Caco-2 (cell line): ENCODE measurements at regions of chr12 and their contacts with region 1.

Region 1: GRCh38 chr12:71415336-71416231 is 24.0 kb upstream of the LGR5 start:
- DNase-seq: peak; percentile 41 to 72
- H3K4me3 ChIP-seq: no peak overlapping the region
- H3K4me3 Mint-ChIP-seq: no peak overlapping the region
- H3K27ac Mint-ChIP-seq: no peak overlapping the region
- H3K4me1 ChIP-seq: no peaks in the 10 kb centered on the region
- H3K4me1 Mint-ChIP-seq: no peaks in the 10 kb centered on the region
- H3K27me3 ChIP-seq: no peaks in the 10 kb centered on the region
- H3K27me3 Mint-ChIP-seq: no peaks in the 10 kb centered on the region
- CTCF ChIP-seq: peak; percentile 70 to 74

Region 2: DNA sequence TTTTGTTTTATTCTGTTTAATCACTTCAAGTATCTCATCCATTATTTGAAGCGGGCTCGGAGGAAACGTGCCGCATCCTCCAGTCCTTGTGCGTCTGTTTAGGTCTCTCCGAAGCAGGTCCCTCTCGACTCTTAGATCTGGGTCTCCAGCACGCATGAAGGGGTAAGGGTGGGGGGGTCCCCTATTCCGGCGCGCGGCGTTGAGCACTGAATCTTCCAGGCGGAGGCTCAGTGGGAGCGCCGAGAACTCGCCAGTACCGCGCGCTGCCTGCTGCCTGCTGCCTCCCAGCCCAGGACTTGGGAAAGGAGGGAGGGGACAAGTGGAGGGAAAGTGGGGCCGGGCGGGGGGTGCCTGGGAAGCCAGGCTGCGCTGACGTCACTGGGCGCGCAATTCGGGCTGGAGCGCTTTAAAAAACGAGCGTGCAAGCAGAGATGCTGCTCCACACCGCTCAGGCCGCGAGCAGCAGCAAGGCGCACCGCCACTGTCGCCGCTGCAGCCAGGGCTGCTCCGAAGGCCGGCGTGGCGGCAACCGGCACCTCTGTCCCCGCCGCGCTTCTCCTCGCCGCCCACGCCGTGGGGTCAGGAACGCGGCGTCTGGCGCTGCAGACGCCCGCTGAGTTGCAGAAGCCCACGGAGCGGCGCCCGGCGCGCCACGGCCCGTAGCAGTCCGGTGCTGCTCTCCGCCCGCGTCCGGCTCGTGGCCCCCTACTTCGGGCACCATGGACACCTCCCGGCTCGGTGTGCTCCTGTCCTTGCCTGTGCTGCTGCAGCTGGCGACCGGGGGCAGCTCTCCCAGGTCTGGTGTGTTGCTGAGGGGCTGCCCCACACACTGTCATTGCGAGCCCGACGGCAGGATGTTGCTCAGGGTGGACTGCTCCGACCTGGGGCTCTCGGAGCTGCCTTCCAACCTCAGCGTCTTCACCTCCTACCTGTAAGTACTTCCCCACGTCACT is 24.1 kb after region 1 on chr12 and contains the start of gene LGR5:
- CTCF ChIA-PET with region 1: no interaction called
- POLR2A ChIA-PET with region 1: no interaction called
- intact Hi-C with region 1: loop called (anchors 1 kb)
- DNase-seq: peak; percentile 84 to 86
- H3K4me3 ChIP-seq: peak within 1 kb of the TSS; percentile 61
- H3K4me3 Mint-ChIP-seq: peak within 1 kb of the TSS; percentile 82
- H3K27ac Mint-ChIP-seq: peak within 1 kb of the TSS; percentile 40
- H3K4me1 ChIP-seq: peaks cover 3% of the 10 kb centered on the region; the same call in 1 of the 2 replicates
- H3K4me1 Mint-ChIP-seq: peaks cover 24% of the 10 kb centered on the region
- H3K27me3 ChIP-seq: no peaks in the 10 kb centered on the region
- H3K27me3 Mint-ChIP-seq: no peaks in the 10 kb centered on the region
- CTCF ChIP-seq: no peak
- total RNA-seq, gene LGR5: 28.0 and 28.4 TPM in 2 replicates

Region 3: DNA sequence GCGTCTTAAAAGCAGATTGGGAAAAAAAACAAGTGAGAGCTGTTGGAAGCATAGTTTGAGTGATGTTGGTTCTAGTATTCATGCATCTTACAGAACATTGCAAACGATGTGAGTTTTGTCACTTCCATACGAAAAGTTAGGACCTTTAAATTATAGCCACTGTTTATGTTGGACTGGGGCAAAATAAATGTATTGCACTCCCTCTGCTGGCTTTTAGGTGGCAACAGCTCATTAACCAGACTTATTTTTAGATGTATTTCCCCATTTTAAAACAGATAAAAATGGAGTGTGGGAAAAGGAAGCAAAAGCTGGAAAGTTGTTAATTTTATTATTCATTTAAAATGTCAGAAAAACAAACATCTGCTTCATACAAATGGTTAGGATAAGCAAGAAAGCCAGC is 135.9 kb after region 1 on chr12:
- CTCF ChIA-PET with region 1: interaction called, 5 read pairs
- POLR2A ChIA-PET with region 1: no interaction called
- intact Hi-C with region 1: loop called (anchors 1 kb)
- DNase-seq: no peak
- H3K4me3 ChIP-seq: no peak overlapping the region
- H3K4me3 Mint-ChIP-seq: no peak overlapping the region
- H3K27ac Mint-ChIP-seq: no peak overlapping the region
- H3K4me1 ChIP-seq: no peaks in the 10 kb centered on the region
- H3K4me1 Mint-ChIP-seq: peaks cover 7% of the 10 kb centered on the region
- H3K27me3 ChIP-seq: no peaks in the 10 kb centered on the region
- H3K27me3 Mint-ChIP-seq: no peaks in the 10 kb centered on the region
- CTCF ChIP-seq: peak; percentile 48 to 54

Region 4: GRCh38 chr12:71567537-71567936 is 152.0 kb after region 1 on chr12:
- CTCF ChIA-PET with region 1: no interaction called
- POLR2A ChIA-PET with region 1: no interaction called
- intact Hi-C with region 1: loop called (anchors 1 kb)
- DNase-seq: peak in 1 of 2 experiments; percentile 12
- H3K4me3 ChIP-seq: no peak overlapping the region
- H3K4me3 Mint-ChIP-seq: no peak overlapping the region
- H3K27ac Mint-ChIP-seq: no peak overlapping the region
- H3K4me1 ChIP-seq: peaks cover 4% of the 10 kb centered on the region; the same call in 1 of the 2 replicates
- H3K4me1 Mint-ChIP-seq: no peaks in the 10 kb centered on the region
- H3K27me3 ChIP-seq: no peaks in the 10 kb centered on the region
- H3K27me3 Mint-ChIP-seq: no peaks in the 10 kb centered on the region
- CTCF ChIP-seq: no peak

Region 5: GRCh38 chr12:71636704-71637115 is 221.1 kb after region 1 on chr12:
- CTCF ChIA-PET with region 1: no interaction called
- POLR2A ChIA-PET with region 1: no interaction called
- intact Hi-C with region 1: loop called (anchors 1 kb)
- DNase-seq: peak in 1 of 2 experiments; percentile 60
- H3K4me3 ChIP-seq: no peak overlapping the region
- H3K4me3 Mint-ChIP-seq: no peak overlapping the region
- H3K27ac Mint-ChIP-seq: no peak overlapping the region
- H3K4me1 ChIP-seq: peaks cover 22% of the 10 kb centered on the region
- H3K4me1 Mint-ChIP-seq: peaks cover 10% of the 10 kb centered on the region
- H3K27me3 ChIP-seq: no peaks in the 10 kb centered on the region
- H3K27me3 Mint-ChIP-seq: no peaks in the 10 kb centered on the region
- CTCF ChIP-seq: peak; percentile 63 to 84